Panc1 (cell line): ENCODE measurements at regions of chr6 and their contacts with region 1.

Region 1: DNA sequence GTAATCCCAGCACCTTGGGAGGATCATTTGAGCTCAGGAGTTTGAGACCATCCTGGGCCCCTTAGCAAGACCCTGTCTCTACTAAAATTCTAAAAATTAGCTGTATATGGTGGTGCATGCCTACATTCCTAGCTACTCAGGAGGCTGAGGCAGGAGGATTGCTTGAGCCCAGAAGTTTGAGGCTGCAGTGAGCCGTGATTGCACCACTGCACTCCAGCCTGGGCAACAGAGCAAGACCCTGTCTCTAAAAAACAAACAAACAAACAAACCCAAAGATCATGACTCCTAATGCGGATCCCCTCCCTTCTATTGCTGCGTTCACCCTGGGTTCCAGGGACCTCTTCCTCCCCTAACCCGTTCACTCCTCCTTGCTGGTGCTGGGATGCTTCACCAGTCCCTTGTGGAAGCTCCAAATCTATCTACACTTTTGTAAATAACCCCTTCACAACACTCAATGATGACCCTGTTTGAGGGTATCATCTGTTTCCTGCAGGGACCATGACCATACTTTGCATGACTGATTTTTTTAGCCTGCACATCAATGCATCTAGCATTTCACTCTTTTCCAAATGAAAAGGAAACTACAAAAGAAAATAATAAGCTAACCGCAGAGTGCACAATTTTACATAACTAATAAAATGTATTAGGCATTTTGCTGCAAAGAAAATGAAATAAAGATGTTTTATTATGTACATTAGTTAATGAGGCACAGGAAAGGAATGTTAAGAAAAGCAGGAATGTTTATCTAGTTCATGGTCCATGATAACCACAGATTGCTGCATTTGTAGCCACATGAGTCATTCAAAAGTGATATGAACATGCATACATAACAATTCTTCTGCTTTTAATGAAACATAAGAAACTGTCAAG is 30.5 kb upstream of the IPCEF1 start:
- DNase-seq: no peak
- ATAC-seq: peak; percentile 89
- H3K4me3 ChIP-seq: no peak overlapping the region
- H3K27ac ChIP-seq: peak overlapping the region; percentile 52; the same call in 1 of the 2 replicates
- H3K4me1 ChIP-seq: peaks cover 7% of the 10 kb centered on the region; the same call in 1 of the 2 replicates
- H3K27me3 ChIP-seq: no peaks in the 10 kb centered on the region
- CTCF ChIP-seq: no peak

Region 2: GRCh38 chr6:153976921-153977693 is 410.0 kb before region 1 on chr6:
- CTCF ChIA-PET with region 1: interaction called, 10 read pairs
- POLR2A ChIA-PET with region 1: interaction called, 3 read pairs
- in situ Hi-C with region 1: no loop called
- intact Hi-C with region 1: no loop called
- DNase-seq: no peak
- ATAC-seq: no peak
- H3K4me3 ChIP-seq: no peak overlapping the region
- H3K27ac ChIP-seq: no peak overlapping the region
- H3K4me1 ChIP-seq: no peaks in the 10 kb centered on the region
- H3K27me3 ChIP-seq: no peaks in the 10 kb centered on the region
- CTCF ChIP-seq: no peak

Region 3: GRCh38 chr6:154139892-154140291 is 247.2 kb before region 1 on chr6:
- CTCF ChIA-PET with region 1: no interaction called
- POLR2A ChIA-PET with region 1: no interaction called
- in situ Hi-C with region 1: no loop called
- intact Hi-C with region 1: no loop called
- DNase-seq: no peak
- ATAC-seq: no peak
- H3K4me3 ChIP-seq: no peak overlapping the region
- H3K27ac ChIP-seq: no peak overlapping the region
- H3K4me1 ChIP-seq: no peaks in the 10 kb centered on the region
- H3K27me3 ChIP-seq: no peaks in the 10 kb centered on the region
- CTCF ChIP-seq: no peak

Region 4: DNA sequence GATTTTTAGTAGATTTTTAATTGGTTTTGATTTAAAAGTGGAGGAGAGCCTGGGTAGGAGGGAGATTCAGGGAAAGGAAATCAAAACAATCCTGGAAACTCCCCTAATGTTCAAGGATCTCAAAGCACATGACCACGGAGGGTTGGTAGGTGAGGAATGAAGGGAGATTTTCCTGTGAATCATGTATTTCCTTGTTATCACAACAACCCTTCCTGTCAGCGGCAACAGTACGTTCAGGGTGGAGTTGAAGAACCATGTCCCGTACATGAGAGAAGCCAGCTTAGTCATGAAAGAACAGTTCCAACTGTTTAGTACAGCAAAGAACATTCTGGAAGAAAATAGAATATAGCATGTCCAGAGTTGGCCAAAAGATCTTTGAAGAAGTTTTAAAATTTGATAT is 266.8 kb after region 1 on chr6:
- CTCF ChIA-PET with region 1: interaction called, 13 read pairs
- POLR2A ChIA-PET with region 1: no interaction called
- in situ Hi-C with region 1: no loop called
- intact Hi-C with region 1: no loop called
- DNase-seq: no peak
- ATAC-seq: peak; percentile 83; the same call in 1 of the 2 replicates
- H3K4me3 ChIP-seq: no peak overlapping the region
- H3K27ac ChIP-seq: no peak overlapping the region
- H3K4me1 ChIP-seq: peaks cover 4% of the 10 kb centered on the region; the same call in 1 of the 2 replicates
- H3K27me3 ChIP-seq: no peaks in the 10 kb centered on the region
- CTCF ChIP-seq: no peak